IMR-90 (cell line): ENCODE measurements at regions of chr2 and their contacts with region 1.

Region 1: GRCh38 chr2:85538486-85539360 is at the start of gene MAT2A:
- DNase-seq: peak; percentile 90
- ATAC-seq: peak; percentile 85
- H3K4me3 ChIP-seq: peak within 1 kb of the TSS; percentile 78
- H3K27ac ChIP-seq: peak within 1 kb of the TSS; percentile 92
- H3K4me1 ChIP-seq: peaks cover 8% of the 10 kb centered on the region
- H3K27me3 ChIP-seq: no peaks in the 10 kb centered on the region
- CTCF ChIP-seq: peak; percentile 66
- POLR2A ChIP-seq: peak; percentile 100
- RAD21 ChIP-seq: peak; percentile 50
- total RNA-seq, gene MAT2A: 94.1 and 98.9 TPM in 2 replicates

Region 2: GRCh38 chr2:85420536-85421259 is 118.0 kb before region 1 on chr2:
- CTCF ChIA-PET with region 1: interaction called, 4 read pairs
- POLR2A ChIA-PET with region 1: interaction called, 16 read pairs
- dilution Hi-C with region 1: no loop called
- in situ Hi-C with region 1: no loop called
- intact Hi-C with region 1: loop called (anchors 1 kb)
- DNase-seq: peak; percentile 77
- ATAC-seq: peak; percentile 77
- H3K4me3 ChIP-seq: no peak overlapping the region
- H3K27ac ChIP-seq: peak overlapping the region; percentile 85
- H3K4me1 ChIP-seq: peaks cover 23% of the 10 kb centered on the region
- H3K27me3 ChIP-seq: no peaks in the 10 kb centered on the region
- CTCF ChIP-seq: peak; percentile 97
- POLR2A ChIP-seq: no peak; the same call in 1 of the 2 replicates
- RAD21 ChIP-seq: peak; percentile 100

Region 3: GRCh38 chr2:85437488-85438284 is 101.0 kb before region 1 on chr2:
- CTCF ChIA-PET with region 1: interaction called, 3 read pairs
- POLR2A ChIA-PET with region 1: interaction called, 14 read pairs
- dilution Hi-C with region 1: no loop called
- in situ Hi-C with region 1: no loop called
- intact Hi-C with region 1: loop called (anchors 2 kb)
- DNase-seq: peak; percentile 77
- ATAC-seq: peak; percentile 63
- H3K4me3 ChIP-seq: peak overlapping the region; percentile 29; the same call in 1 of the 2 replicates
- H3K27ac ChIP-seq: peak overlapping the region; percentile 79
- H3K4me1 ChIP-seq: peaks cover 29% of the 10 kb centered on the region
- H3K27me3 ChIP-seq: no peaks in the 10 kb centered on the region
- CTCF ChIP-seq: no peak
- POLR2A ChIP-seq: peak; percentile 78
- RAD21 ChIP-seq: no peak

Region 4: DNA sequence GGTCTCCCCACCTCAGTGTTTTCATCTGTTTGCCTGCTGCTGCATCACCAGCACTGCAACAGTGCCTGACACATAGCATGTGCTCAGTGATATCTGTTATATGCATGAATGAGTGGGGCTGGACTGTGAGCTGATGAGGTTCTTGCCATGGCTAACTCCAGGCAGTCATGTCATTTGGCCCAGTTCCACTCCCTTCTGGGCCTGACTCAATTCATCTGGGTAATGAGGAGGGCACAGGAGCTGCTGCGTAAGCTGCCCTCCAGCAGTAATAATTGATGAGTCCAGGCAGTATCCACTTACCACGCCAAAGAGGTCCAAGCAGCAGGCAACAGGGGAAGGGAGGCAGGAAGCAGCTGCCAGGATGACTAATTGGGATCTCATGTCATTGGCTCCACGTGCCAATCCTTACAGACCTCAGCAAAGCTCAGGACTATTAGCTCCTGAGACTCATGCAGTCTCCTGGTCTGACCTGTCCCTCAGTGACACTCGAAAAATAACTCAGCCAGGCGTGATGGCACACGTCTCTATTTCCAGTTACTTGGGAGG is 33.9 kb before region 1 on chr2:
- CTCF ChIA-PET with region 1: interaction called, 5 read pairs
- POLR2A ChIA-PET with region 1: interaction called, 19 read pairs
- dilution Hi-C with region 1: no loop called
- in situ Hi-C with region 1: no loop called
- intact Hi-C with region 1: loop called (anchors 2 kb)
- DNase-seq: peak; percentile 97
- ATAC-seq: peak; percentile 70
- H3K4me3 ChIP-seq: no peak overlapping the region
- H3K27ac ChIP-seq: peak overlapping the region; percentile 72
- H3K4me1 ChIP-seq: peaks cover 32% of the 10 kb centered on the region
- H3K27me3 ChIP-seq: no peaks in the 10 kb centered on the region
- CTCF ChIP-seq: no peak
- POLR2A ChIP-seq: no peak
- RAD21 ChIP-seq: no peak; the same call in 1 of the 2 replicates

Region 5: DNA sequence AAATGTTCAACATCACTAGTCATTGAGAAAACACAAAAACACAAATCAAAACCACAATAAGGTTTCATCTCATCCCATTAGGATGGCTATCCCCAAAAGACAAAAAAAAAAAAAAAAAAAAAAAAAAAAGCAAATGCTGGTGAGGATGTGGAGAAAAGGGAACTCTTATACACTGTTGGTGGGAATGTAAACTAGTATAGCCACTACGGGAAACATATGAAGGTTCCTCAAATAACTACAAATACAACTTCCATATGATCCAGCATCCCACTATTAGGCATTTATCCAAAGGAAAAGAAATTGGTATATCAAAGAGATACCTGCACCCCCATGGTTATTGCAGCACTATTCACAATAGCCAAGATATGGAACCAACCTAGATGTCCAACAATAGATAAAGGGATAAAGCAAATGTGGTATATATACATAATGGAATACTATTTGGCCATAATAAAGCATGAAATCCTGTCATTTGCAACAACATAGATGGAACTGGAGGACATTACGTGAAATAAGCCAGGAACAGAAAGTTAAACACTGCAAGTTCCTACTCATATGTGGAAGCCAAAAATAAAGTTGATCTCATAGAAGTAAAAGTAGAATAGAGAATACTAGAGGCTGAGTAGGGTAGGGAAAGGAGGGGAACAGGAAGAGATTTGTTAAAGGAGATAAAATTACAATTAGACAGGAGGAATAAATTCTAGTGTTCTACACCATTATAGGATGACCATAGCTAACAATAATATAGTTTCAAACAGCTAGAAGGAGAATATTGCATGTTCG is 558.6 kb after region 1 on chr2:
- CTCF ChIA-PET with region 1: no interaction called
- POLR2A ChIA-PET with region 1: no interaction called
- dilution Hi-C with region 1: no loop called
- in situ Hi-C with region 1: no loop called
- intact Hi-C with region 1: no loop called
- DNase-seq: no peak
- ATAC-seq: no peak
- H3K4me3 ChIP-seq: no peak overlapping the region
- H3K27ac ChIP-seq: no peak overlapping the region
- H3K4me1 ChIP-seq: no peaks in the 10 kb centered on the region
- H3K27me3 ChIP-seq: no peaks in the 10 kb centered on the region
- CTCF ChIP-seq: no peak
- POLR2A ChIP-seq: no peak
- RAD21 ChIP-seq: no peak